ENCODE measurements at regions of chr5 and their contacts with region 1.

Region 1: GRCh38 chr5:67202828-67203227 is 6.2 kb upstream of the CD180 start:
- DNase-seq: no peak
- H3K4me3 Mint-ChIP-seq: no peak overlapping the region
- H3K27ac Mint-ChIP-seq: peak overlapping the region; percentile 75
- H3K4me1 Mint-ChIP-seq: peaks cover 79% of the 10 kb centered on the region
- H3K27me3 Mint-ChIP-seq: no peaks in the 10 kb centered on the region

Region 2: GRCh38 chr5:65721720-65722574 is 1480.9 kb before region 1 on chr5 and contains the starts of genes NLN and SGTB:
- intact Hi-C with region 1: loop called (anchors 5 kb)
- DNase-seq: peak; percentile 79
- H3K4me3 Mint-ChIP-seq: peak within 1 kb of the TSS; percentile 93
- H3K27ac Mint-ChIP-seq: peak within 1 kb of the TSS; percentile 88
- H3K4me1 Mint-ChIP-seq: peaks cover 29% of the 10 kb centered on the region
- H3K27me3 Mint-ChIP-seq: no peaks in the 10 kb centered on the region
- total RNA-seq, gene NLN: 22.5 and 22.8 TPM in 2 replicates
- total RNA-seq, gene SGTB: 7.6 TPM in 2 replicates

Region 3: GRCh38 chr5:67115246-67115645 is 87.6 kb before region 1 on chr5:
- intact Hi-C with region 1: no loop called
- DNase-seq: no peak
- H3K4me3 Mint-ChIP-seq: no peak overlapping the region
- H3K27ac Mint-ChIP-seq: no peak overlapping the region
- H3K4me1 Mint-ChIP-seq: no peaks in the 10 kb centered on the region
- H3K27me3 Mint-ChIP-seq: no peaks in the 10 kb centered on the region

Region 4: DNA sequence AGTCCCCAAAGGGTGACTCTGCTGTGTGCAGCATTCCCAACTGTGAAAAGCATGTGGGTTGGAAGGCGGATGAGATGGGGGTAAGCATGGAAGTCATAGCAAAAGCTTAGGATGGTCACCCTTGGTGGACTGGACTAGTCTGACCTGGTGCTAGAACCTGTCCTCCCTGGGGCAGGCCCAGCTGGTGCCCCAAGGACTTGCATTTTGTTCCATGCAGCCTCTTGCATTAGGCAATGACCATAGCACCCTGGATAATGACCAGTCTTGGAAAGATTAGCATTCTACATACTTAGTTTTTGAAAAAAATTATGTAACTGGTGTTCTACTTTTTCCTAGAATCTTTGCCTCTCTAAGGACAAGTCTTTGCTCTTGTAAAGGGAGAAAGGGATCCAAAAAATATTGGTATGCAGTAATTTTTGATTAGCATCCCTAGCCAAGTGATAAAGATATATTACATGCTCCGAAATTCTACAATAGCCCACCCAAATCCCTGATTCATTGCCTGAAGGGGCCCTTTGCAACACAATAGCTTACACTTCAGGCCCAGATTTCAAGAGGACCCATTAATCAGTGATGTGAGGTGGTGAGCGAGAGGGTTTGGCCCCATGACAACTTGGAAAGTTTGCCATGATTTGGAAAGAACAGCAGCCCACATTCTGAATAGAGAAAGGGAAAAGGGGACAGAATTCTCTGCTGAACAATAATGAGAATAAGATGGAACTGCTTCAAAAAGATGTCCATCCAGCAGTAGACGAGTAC is 87.1 kb after region 1 on chr5:
- intact Hi-C with region 1: no loop called
- DNase-seq: no peak
- H3K4me3 Mint-ChIP-seq: no peak overlapping the region
- H3K27ac Mint-ChIP-seq: no peak overlapping the region
- H3K4me1 Mint-ChIP-seq: no peaks in the 10 kb centered on the region
- H3K27me3 Mint-ChIP-seq: peaks cover 3% of the 10 kb centered on the region

Region 5: GRCh38 chr5:67752331-67752673 is 549.5 kb after region 1 on chr5:
- intact Hi-C with region 1: no loop called
- DNase-seq: no peak
- H3K4me3 Mint-ChIP-seq: no peak overlapping the region
- H3K27ac Mint-ChIP-seq: no peak overlapping the region
- H3K4me1 Mint-ChIP-seq: no peaks in the 10 kb centered on the region
- H3K27me3 Mint-ChIP-seq: no peaks in the 10 kb centered on the region